CD4-positive, alpha-beta memory T cell (primary cell): ENCODE measurements at regions of chr12 and their contacts with region 1.

Region 1: GRCh38 chr12:93569656-93570551 is 2.6 kb upstream of the SOCS2 start:
- DNase-seq: peak; percentile 73 to 80 (median 74)
- H3K4me3 ChIP-seq: peak overlapping the region; percentile 71 to 78
- H3K4me3 Mint-ChIP-seq: peak overlapping the region; percentile 90 to 98 (median 92)
- H3K27ac ChIP-seq: peak overlapping the region; percentile 73
- H3K27ac Mint-ChIP-seq: peak overlapping the region; percentile 87 to 96 (median 92)
- H3K4me1 ChIP-seq: peaks cover 28% of the 10 kb centered on the region
- H3K4me1 Mint-ChIP-seq: peaks cover 16 to 41% (median 28%) of the 10 kb centered on the region in 4 donors
- H3K27me3 ChIP-seq: peaks cover 3% of the 10 kb centered on the region
- H3K27me3 Mint-ChIP-seq: peaks cover 1 to 2% of the 10 kb centered on the region in 2 donors

Region 2: DNA sequence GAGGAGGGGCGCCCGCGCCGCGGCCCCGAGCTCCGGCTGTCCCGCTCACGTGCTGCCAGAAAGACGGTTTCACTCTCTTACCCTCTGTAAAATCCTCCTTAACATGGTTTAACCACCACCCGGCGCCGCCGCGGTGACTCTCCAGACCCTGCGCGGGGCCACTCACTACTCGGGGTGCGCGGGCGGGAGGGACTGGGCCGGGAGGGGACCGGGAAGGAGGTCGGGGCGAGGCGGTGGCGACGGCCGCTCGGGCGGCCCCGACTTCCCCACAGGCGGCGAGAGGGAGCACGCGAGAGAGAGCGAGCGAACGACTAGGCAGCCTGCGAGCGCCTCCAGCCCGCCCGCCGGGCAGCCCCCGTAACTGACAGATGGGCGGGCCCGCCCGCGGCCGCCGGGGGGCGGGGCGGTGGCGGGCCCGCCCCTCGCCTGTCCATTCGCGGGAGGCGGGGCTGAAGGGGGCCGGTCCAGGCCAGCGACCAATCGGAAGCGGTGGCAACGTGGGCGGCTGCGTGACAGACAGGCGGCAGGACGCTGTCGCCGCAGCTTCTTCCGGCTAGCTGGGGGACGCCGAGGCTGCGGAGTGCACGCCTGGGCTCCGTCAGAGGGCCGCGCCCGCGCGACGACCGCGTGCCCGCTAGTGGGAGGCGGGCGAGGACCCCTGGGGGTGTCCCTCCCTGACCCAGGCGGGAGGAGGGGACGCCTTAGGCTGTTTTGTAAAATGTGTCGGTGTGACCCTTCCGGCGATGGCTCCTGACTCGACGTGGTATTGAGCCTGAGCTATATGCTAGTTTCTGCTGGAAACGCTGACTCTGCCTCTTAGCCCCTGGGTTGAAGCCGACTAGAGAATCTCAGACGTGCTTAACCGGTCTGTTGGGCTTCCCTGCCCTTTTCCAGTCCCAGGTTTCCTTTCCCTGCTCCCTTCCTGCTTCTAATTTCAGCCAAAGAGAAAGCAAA is 640.7 kb before region 1 on chr12 and contains the start of gene EEA1:
- CTCF ChIA-PET with region 1: no interaction called
- POLR2A ChIA-PET with region 1: no interaction called
- intact Hi-C with region 1: loop called (anchors 1 kb)
- DNase-seq: peak; percentile 92 to 94 (median 94)
- H3K4me3 ChIP-seq: peak within 1 kb of the TSS; percentile 57 to 59
- H3K4me3 Mint-ChIP-seq: peak within 1 kb of the TSS; percentile 89 to 94 (median 92)
- H3K27ac ChIP-seq: peak within 1 kb of the TSS; percentile 90
- H3K27ac Mint-ChIP-seq: peak within 1 kb of the TSS; percentile 87 to 98 (median 95)
- H3K4me1 ChIP-seq: peaks cover 28% of the 10 kb centered on the region
- H3K4me1 Mint-ChIP-seq: peaks cover 21 to 38% (median 32%) of the 10 kb centered on the region in 4 donors
- H3K27me3 ChIP-seq: no peaks in the 10 kb centered on the region
- H3K27me3 Mint-ChIP-seq: no peaks in the 10 kb centered on the region
- total RNA-seq, gene EEA1: 16.1 to 16.4 TPM

Region 3: DNA sequence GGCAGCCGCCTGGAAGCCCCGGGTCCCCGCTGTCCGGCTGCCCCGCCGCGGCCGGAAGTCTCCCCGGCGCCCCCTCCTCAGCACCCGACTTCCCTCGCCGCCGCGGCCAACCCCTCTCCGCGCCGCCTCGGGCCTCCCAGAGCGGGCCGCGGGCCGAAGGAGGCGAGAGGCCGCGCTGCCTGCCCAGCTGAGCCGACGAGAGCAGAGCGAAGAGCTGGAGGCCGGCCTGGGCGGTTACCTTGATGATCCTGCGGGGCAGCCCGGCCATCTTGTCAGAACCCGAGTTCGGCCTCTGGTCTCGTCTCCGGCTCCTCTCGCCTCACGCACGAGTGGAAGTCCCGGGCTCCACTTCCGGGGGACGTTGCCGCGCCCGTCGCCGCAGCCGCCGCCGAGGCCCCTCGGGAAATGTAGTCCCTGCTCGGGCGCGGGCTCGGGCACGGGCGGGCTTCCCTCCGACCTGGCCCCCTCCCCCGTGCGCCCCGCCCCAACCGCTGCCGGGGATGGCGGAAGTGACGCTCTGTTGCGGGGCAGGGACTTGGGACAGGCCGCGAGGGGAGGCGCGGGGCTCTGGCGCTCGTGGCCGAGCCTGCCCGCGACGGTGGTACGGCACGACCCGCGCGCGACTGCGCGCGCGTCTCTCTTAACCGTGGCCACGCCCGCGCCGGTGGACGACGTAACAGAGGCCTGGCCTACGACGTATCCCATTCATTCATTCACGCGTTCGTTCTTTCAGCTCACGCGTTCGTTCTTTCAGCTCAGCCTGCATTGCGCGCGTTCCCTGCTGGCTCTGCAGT is 128.1 kb before region 1 on chr12 and contains the start of gene UBE2N:
- CTCF ChIA-PET with region 1: no interaction called
- POLR2A ChIA-PET with region 1: no interaction called
- intact Hi-C with region 1: loop called (anchors 2 kb)
- DNase-seq: peak; percentile 95 to 97 (median 97)
- H3K4me3 ChIP-seq: peak within 1 kb of the TSS; percentile 90 to 98
- H3K4me3 Mint-ChIP-seq: peak within 1 kb of the TSS; percentile 94 to 98 (median 97)
- H3K27ac ChIP-seq: peak within 1 kb of the TSS; percentile 95
- H3K27ac Mint-ChIP-seq: peak within 1 kb of the TSS; percentile 94 to 100 (median 99)
- H3K4me1 ChIP-seq: peaks cover 48% of the 10 kb centered on the region
- H3K4me1 Mint-ChIP-seq: peaks cover 36 to 51% (median 45%) of the 10 kb centered on the region in 4 donors
- H3K27me3 ChIP-seq: no peaks in the 10 kb centered on the region
- H3K27me3 Mint-ChIP-seq: no peaks in the 10 kb centered on the region
- total RNA-seq, gene UBE2N: 71.2 to 72.8 TPM

Region 4: DNA sequence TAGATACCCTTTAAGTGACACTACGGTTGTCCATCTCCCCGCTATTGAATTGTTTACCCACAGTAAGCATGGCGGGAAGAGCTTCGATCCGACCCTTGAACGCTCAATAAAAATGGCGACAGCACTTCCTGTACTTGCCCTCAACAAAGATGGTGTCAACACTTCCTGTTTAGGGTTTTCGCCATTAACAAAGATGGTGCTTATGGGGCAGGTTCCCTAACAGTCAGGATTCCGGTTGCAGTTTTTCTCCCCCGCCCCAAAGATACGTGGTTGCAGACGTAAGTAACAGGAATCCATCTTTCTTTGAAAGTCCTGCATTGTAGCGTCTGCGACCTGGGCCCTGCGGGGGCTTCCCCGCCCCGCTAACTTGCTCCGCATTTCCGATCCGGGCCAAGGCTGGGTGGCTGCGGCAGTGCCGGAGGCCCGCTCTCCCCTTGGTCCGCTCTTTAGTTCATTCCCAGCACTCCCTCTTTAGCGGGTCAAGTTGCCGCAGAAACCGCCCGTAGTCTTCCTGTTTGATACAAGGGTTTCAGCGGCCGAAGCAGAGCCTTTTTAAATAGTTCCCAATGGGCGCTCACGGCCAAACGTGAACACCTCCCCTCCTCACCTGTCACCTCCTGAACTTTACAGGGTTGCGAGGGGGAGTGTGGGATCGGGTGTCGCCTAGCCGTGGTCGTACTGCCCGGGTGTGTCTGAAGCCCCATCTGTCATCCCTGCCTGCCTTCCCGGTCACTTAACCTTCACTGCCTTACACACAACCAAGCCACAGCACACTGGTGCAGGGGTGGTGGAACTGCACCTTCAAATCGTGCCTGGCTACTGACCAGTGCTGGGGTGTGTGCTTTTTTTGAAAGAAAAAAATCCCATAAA is 107.5 kb after region 1 on chr12 and contains the start of gene CRADD:
- CTCF ChIA-PET with region 1: interaction called, 7 read pairs
- POLR2A ChIA-PET with region 1: interaction called, 7 read pairs
- intact Hi-C with region 1: loop called (anchors 1 kb)
- DNase-seq: peak; percentile 93 to 97 (median 96)
- H3K4me3 ChIP-seq: peak within 1 kb of the TSS; percentile 71 to 73
- H3K4me3 Mint-ChIP-seq: peak within 1 kb of the TSS; percentile 97 to 99 (median 98)
- H3K27ac ChIP-seq: peak within 1 kb of the TSS; percentile 99
- H3K27ac Mint-ChIP-seq: peak within 1 kb of the TSS; percentile 99 to 100 (median 100)
- H3K4me1 ChIP-seq: peaks cover 19% of the 10 kb centered on the region
- H3K4me1 Mint-ChIP-seq: peaks cover 20 to 37% (median 28%) of the 10 kb centered on the region in 4 donors
- H3K27me3 ChIP-seq: no peaks in the 10 kb centered on the region
- H3K27me3 Mint-ChIP-seq: peaks cover 11 to 12% of the 10 kb centered on the region in 2 donors
- total RNA-seq, gene CRADD: 15.7 to 16.0 TPM

Region 5: DNA sequence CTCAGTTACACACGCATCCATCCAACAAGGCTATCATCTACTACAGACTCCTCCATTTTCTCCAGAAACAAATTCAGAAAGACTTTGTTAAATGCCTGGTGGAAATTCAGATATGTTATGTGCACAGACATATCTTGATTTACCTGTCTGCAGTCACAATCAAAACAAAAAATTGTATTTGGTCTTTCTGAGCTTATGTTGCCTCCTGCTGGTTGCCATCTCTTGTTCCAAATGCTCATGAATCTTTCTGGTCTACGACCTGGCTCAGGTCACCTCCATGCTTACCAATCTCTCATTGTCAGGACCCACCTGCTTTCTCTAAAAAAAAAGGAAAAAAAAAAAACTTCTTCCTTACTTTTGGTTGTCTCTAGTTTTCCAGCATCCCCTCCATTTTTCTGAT is 409.3 kb after region 1 on chr12:
- CTCF ChIA-PET with region 1: interaction called, 18 read pairs
- POLR2A ChIA-PET with region 1: interaction called, 3 read pairs
- intact Hi-C with region 1: no loop called
- DNase-seq: peak in 4 of 5 donors; percentile 20 to 45 (median 28)
- H3K4me3 ChIP-seq: no peak overlapping the region
- H3K4me3 Mint-ChIP-seq: no peak overlapping the region
- H3K27ac ChIP-seq: no peak overlapping the region
- H3K27ac Mint-ChIP-seq: peak overlapping the region in 1 of 7 donors; percentile 24
- H3K4me1 ChIP-seq: no peaks in the 10 kb centered on the region
- H3K4me1 Mint-ChIP-seq: peaks cover 0 to 12% (median 7%) of the 10 kb centered on the region in 4 donors
- H3K27me3 ChIP-seq: no peaks in the 10 kb centered on the region
- H3K27me3 Mint-ChIP-seq: no peaks in the 10 kb centered on the region

Region 6: GRCh38 chr12:94459728-94460615 is 890.1 kb after region 1 on chr12 and contains the start of gene CEP83:
- CTCF ChIA-PET with region 1: no interaction called
- POLR2A ChIA-PET with region 1: no interaction called
- intact Hi-C with region 1: loop called (anchors 1 kb)
- DNase-seq: peak; percentile 93 to 97 (median 95)
- H3K4me3 ChIP-seq: peak within 1 kb of the TSS; percentile 89 to 98
- H3K4me3 Mint-ChIP-seq: peak within 1 kb of the TSS; percentile 94 to 98 (median 96)
- H3K27ac ChIP-seq: peak within 1 kb of the TSS; percentile 82
- H3K27ac Mint-ChIP-seq: peak within 1 kb of the TSS; percentile 93 to 98 (median 96)
- H3K4me1 ChIP-seq: peaks cover 15% of the 10 kb centered on the region
- H3K4me1 Mint-ChIP-seq: peaks cover 17 to 47% (median 25%) of the 10 kb centered on the region in 4 donors
- H3K27me3 ChIP-seq: no peaks in the 10 kb centered on the region
- H3K27me3 Mint-ChIP-seq: peaks cover 8% of the 10 kb centered on the region in 2 donors
- total RNA-seq, gene CEP83: 11.2 to 14.8 TPM